Pancreas (tissue), 10 donors: ENCODE measurements at regions of chr3 and their contacts with region 1.

Region 1: DNA sequence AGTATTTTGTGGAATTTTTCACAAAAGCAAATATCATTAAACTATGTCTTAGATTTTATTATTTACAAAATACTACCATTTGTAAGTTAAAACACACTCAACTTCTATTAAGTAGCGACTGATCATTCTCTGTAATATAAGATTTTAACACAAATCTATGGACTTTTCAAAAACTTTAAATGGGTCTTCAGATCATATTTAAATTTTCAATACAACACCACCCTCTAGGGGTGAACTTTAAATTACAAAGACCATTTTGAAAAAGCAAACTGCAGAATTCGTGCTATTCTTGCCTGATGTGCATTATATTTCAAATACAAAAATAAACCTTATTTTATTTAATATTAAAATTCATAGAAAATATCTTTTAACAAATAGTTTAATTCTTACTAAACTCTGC is 8.2 kb upstream of the VGLL4 start:
- DNase-seq: no peak
- ATAC-seq: peak in 3 of 4 donors; percentile 45 to 58 (median 55)
- H3K4me3 ChIP-seq: no peak overlapping the region
- H3K27ac ChIP-seq: no peak overlapping the region
- H3K4me1 ChIP-seq: peaks cover 0 to 12% (median 3%) of the 10 kb centered on the region in 3 donors
- H3K27me3 ChIP-seq: no peaks in the 10 kb centered on the region
- CTCF ChIP-seq: peak in 3 of 4 donors; percentile 46 to 54 (median 49)

Region 2: DNA sequence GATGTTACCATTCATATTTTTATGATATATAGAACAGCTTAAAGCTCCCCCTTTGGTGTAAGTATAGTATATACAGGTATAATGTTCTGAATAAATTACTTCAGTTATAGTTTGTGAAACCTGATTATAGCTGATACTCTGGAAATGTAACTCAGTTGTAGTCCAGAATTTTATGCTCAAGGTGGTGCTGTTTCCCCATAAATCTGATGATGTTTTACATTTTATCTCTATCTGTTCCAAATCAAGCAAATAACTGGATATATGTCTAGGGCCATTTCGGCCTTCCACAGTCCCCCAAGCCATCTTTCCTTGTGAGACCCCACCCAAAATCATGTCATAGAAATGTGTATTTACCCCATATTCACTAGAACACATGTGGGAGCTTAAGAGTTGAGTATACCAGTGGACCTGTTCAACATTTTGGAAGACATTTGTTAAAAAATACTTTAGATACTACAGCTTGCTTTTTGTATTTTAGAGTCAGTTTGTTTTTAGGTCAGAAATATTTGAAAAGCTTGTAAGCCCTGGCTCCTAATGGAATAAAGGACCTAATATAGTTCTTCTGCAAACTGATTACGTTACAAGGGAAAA is 272.6 kb before region 1 on chr3:
- intact Hi-C with region 1: loop called in 2 of 3 experiments (anchors 5 to 10 kb)
- DNase-seq: no peak
- ATAC-seq: peak; percentile 63 to 77 (median 76)
- H3K4me3 ChIP-seq: no peak overlapping the region
- H3K27ac ChIP-seq: peak overlapping the region in 2 of 4 donors; percentile 48 to 66
- H3K4me1 ChIP-seq: peaks cover 6 to 28% (median 25%) of the 10 kb centered on the region in 3 donors
- H3K27me3 ChIP-seq: no peaks in the 10 kb centered on the region
- CTCF ChIP-seq: peak; percentile 13 to 31 (median 26)

Region 3: DNA sequence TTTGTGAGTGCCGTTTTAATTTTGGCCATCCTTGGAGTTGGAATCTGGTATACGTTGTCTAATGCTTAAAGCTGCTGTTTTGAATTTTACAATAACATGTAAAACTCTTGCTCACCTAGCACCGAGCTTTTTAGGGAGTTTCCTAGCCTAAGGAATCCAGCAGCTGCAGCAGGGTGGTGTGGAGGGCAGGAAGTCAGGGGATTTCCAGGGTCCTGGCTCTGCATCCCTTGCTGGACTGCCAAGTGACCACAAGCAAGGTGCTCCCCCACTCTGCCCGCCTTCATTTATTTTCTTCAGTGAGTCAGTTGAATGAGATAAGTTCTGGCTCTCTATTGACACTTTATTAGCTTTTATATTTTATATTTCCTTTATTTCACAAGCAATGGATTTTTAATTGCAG is 266.0 kb before region 1 on chr3:
- intact Hi-C with region 1: loop called in 1 of 3 experiments (anchors 10 kb)
- DNase-seq: peak in 1 of 6 donors; percentile 47
- ATAC-seq: peak in 2 of 4 donors; percentile 48 to 71
- H3K4me3 ChIP-seq: no peak overlapping the region
- H3K27ac ChIP-seq: peak overlapping the region in 2 of 4 donors; percentile 25 to 33
- H3K4me1 ChIP-seq: peaks cover 0 to 35% (median 12%) of the 10 kb centered on the region in 3 donors
- H3K27me3 ChIP-seq: no peaks in the 10 kb centered on the region
- CTCF ChIP-seq: no peak

Region 4: GRCh38 chr3:11498646-11499045 is 153.3 kb before region 1 on chr3:
- intact Hi-C with region 1: no loop called
- DNase-seq: peak; percentile 74 to 91 (median 84)
- ATAC-seq: peak; percentile 95 to 98 (median 97)
- H3K4me3 ChIP-seq: no peak overlapping the region
- H3K27ac ChIP-seq: peak overlapping the region; percentile 37 to 77 (median 56)
- H3K4me1 ChIP-seq: peaks cover 0 to 19% (median 15%) of the 10 kb centered on the region in 3 donors
- H3K27me3 ChIP-seq: no peaks in the 10 kb centered on the region
- CTCF ChIP-seq: no peak

Region 5: GRCh38 chr3:11613851-11614487 is 37.9 kb before region 1 on chr3:
- intact Hi-C with region 1: no loop called
- DNase-seq: no peak
- ATAC-seq: no peak
- H3K4me3 ChIP-seq: no peak overlapping the region
- H3K27ac ChIP-seq: no peak overlapping the region
- H3K4me1 ChIP-seq: peaks cover 6 to 42% (median 28%) of the 10 kb centered on the region in 3 donors
- H3K27me3 ChIP-seq: no peaks in the 10 kb centered on the region
- CTCF ChIP-seq: no peak

Region 6: GRCh38 chr3:11803977-11804892 is 152.3 kb after region 1 on chr3:
- intact Hi-C with region 1: loop called in 1 of 3 experiments (anchors 10 kb)
- DNase-seq: peak in 4 of 6 donors; percentile 26 to 46 (median 33)
- ATAC-seq: peak; percentile 82 to 98 (median 96)
- H3K4me3 ChIP-seq: no peak overlapping the region
- H3K27ac ChIP-seq: no peak overlapping the region
- H3K4me1 ChIP-seq: no peaks in the 10 kb centered on the region
- H3K27me3 ChIP-seq: no peaks in the 10 kb centered on the region
- CTCF ChIP-seq: peak; percentile 46 to 73 (median 63)